HEK293 (cell line): ENCODE measurements at regions of chr6 and their contacts with region 1.

Region 1: GRCh38 chr6:56570413-56571359 is 72.0 kb downstream of the DST start:
- H3K4me3 ChIP-seq: no peak overlapping the region
- H3K27ac ChIP-seq: no peak overlapping the region
- H3K4me1 ChIP-seq: peaks cover 10% of the 10 kb centered on the region; the same call in 1 of the 2 replicates
- CTCF ChIP-seq: no peak

Region 2: GRCh38 chr6:56314683-56315523 is 255.8 kb before region 1 on chr6:
- CTCF ChIA-PET with region 1: interaction called, 17 read pairs
- POLR2A ChIA-PET with region 1: no interaction called
- H3K4me3 ChIP-seq: no peak overlapping the region
- H3K27ac ChIP-seq: no peak overlapping the region
- H3K4me1 ChIP-seq: peaks cover 7% of the 10 kb centered on the region
- CTCF ChIP-seq: peak; percentile 40; the same call in 1 of the 2 replicates

Region 3: GRCh38 chr6:56364827-56365313 is 205.8 kb before region 1 on chr6:
- CTCF ChIA-PET with region 1: interaction called, 23 read pairs
- POLR2A ChIA-PET with region 1: no interaction called
- H3K4me3 ChIP-seq: no peak overlapping the region
- H3K27ac ChIP-seq: no peak overlapping the region
- H3K4me1 ChIP-seq: peaks cover 19% of the 10 kb centered on the region
- CTCF ChIP-seq: no peak

Region 4: DNA sequence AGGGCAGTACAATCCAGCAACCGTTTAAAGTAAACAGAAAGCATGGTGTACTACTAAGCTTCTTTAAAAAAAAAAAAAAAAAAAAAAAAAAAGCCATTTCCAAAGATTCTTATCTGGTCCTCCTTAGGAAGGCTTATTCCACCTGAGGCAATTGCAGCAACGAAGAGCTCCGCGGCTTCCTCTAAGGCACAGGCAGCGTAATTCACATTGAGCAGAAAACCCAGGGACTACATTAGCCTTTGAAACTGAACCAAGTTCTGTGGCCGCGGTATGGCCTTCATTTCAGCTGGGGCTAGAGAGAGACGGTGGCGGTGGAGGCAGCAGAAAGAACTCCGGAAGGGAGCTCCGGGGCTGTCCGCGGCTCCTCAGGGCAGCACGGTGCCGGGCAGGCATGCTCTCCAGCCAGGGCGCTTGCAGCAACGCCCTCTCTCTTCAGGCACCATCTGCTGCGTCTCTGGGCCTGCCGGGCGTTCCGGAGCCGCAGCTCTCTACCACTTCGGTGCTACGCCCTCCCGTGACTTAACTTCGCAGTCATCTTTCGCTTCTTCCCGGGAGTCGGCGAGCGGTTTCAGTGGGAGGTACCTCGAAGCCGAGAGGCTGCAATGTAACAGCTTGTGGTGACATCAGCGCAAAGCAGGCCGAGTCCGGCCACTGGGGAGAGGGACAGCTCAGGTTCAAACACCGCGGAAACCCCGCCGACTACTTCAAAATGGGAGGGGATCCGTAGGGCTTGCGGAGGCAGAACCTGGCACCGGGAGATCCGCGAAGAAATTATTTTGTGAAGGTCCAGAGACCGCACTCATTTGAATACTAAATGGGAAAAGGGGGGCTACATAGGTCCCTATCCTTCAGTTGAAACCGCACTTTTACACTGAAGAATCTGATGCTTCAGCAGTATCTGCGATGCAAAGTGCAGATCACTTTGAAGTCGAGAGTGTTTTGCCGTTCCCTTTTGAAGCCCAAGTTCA is 28.0 kb before region 1 on chr6:
- CTCF ChIA-PET with region 1: interaction called, 29 read pairs
- POLR2A ChIA-PET with region 1: interaction called, 15 read pairs
- H3K4me3 ChIP-seq: peak overlapping the region; percentile 53
- H3K27ac ChIP-seq: peak overlapping the region; percentile 95
- H3K4me1 ChIP-seq: peaks cover 28% of the 10 kb centered on the region
- CTCF ChIP-seq: peak; percentile 92

Region 5: GRCh38 chr6:56555438-56555872 is 15.2 kb before region 1 on chr6:
- CTCF ChIA-PET with region 1: interaction called, 25 read pairs
- POLR2A ChIA-PET with region 1: no interaction called
- H3K4me3 ChIP-seq: no peak overlapping the region
- H3K27ac ChIP-seq: no peak overlapping the region
- H3K4me1 ChIP-seq: peaks cover 55% of the 10 kb centered on the region
- CTCF ChIP-seq: no peak